ENCODE measurements at regions of chr3 and their contacts with region 1.

Region 1: GRCh38 chr3:33807190-33807589 is 8.8 kb downstream of the PDCD6IP start:
- DNase-seq: no peak
- H3K4me3 ChIP-seq: no peak overlapping the region
- H3K27ac ChIP-seq: no peak overlapping the region
- H3K4me1 ChIP-seq: no peaks in the 10 kb centered on the region
- H3K27me3 ChIP-seq: no peaks in the 10 kb centered on the region
- CTCF ChIP-seq: no peak

Region 2: DNA sequence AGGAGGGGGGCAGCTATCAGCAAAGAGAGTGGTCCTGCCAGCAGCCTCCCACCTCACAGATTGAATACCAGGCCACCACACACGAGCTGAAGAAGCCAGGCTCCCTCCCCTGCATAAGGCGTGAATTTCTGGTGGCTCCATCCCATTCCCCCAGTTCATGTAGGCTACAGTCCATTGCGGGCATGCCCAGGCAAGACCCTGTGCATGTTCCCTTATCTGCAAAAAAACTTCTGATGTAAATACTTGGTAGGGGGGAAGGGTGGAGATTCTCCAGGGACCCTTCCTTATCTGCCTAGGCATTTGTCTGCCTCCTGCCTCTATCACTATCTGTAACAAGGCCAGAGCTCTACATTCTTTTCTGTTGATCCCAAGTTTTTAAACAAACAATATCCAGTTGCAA is 339.4 kb before region 1 on chr3:
- CTCF ChIA-PET with region 1: no interaction called
- POLR2A ChIA-PET with region 1: interaction called, 13 read pairs
- intact Hi-C with region 1: no loop called
- DNase-seq: no peak
- H3K4me3 ChIP-seq: no peak overlapping the region
- H3K27ac ChIP-seq: no peak overlapping the region
- H3K4me1 ChIP-seq: no peaks in the 10 kb centered on the region
- H3K27me3 ChIP-seq: no peaks in the 10 kb centered on the region
- CTCF ChIP-seq: no peak

Region 3: DNA sequence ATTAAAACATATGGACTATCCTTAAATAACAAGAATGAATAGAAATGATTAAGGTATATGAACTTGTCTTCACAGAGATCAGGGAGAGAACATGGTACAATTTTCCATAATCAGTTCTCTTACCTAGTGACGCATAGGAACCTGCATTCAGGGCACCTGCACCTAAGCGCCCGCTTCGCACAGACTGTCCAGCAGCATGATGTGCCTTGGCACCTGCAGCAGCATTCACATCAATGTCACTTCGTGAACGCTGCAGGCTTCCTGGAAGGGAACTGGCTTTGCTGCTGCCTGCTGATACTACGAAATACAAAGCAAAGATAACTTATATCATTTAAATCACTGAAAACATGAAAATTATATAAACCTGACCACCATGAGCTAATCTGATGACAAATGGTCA is 204.4 kb before region 1 on chr3:
- CTCF ChIA-PET with region 1: no interaction called
- POLR2A ChIA-PET with region 1: no interaction called
- intact Hi-C with region 1: no loop called
- DNase-seq: no peak
- H3K4me3 ChIP-seq: no peak overlapping the region
- H3K27ac ChIP-seq: no peak overlapping the region
- H3K4me1 ChIP-seq: no peaks in the 10 kb centered on the region
- H3K27me3 ChIP-seq: no peaks in the 10 kb centered on the region
- CTCF ChIP-seq: no peak

Region 4: DNA sequence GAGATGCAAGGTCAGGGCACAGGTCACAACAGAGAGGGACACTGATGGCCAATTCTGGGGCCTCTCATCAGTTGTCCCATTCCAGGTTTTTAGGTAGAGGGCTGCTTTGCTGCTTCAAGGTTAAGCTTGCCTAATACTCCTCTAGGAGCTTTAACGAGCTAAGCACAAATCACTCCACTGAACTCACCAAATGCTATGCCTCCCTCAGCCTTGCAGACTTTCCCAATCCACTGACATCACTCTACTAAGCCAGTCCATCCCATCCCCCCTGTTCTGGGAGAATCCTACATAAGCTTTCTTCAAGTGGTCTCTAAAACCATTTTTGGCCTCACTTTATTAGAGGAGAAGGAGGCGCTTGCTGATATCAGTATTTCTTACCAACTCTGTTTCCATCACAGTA is 33.6 kb before region 1 on chr3:
- CTCF ChIA-PET with region 1: no interaction called
- POLR2A ChIA-PET with region 1: no interaction called
- intact Hi-C with region 1: no loop called
- DNase-seq: no peak
- H3K4me3 ChIP-seq: no peak overlapping the region
- H3K27ac ChIP-seq: no peak overlapping the region
- H3K4me1 ChIP-seq: no peaks in the 10 kb centered on the region
- H3K27me3 ChIP-seq: no peaks in the 10 kb centered on the region
- CTCF ChIP-seq: no peak

Region 5: DNA sequence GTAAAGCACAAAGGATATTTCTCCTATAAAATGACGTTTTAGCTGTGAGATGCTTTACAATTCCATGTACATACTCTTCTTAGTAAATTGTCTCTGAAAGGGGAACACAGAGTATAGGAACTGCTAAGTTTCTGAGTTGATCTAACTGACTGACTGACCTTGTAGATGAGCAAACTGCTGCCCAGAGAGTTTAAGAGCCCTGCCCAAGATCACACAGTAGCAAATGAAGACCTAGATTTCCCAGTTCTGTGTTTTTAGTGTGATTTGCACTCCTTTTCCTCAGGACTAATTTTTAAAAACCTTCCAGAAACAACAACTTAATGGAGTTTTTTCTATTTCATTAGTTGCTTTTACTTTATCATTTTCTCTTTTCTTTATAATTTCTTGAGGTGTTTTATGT is 239.0 kb after region 1 on chr3:
- CTCF ChIA-PET with region 1: no interaction called
- POLR2A ChIA-PET with region 1: no interaction called
- intact Hi-C with region 1: no loop called
- DNase-seq: no peak
- H3K4me3 ChIP-seq: no peak overlapping the region
- H3K27ac ChIP-seq: no peak overlapping the region
- H3K4me1 ChIP-seq: no peaks in the 10 kb centered on the region
- H3K27me3 ChIP-seq: no peaks in the 10 kb centered on the region
- CTCF ChIP-seq: no peak